ENCODE measurements at regions of chr3 and their contacts with region 1.

Region 1: DNA sequence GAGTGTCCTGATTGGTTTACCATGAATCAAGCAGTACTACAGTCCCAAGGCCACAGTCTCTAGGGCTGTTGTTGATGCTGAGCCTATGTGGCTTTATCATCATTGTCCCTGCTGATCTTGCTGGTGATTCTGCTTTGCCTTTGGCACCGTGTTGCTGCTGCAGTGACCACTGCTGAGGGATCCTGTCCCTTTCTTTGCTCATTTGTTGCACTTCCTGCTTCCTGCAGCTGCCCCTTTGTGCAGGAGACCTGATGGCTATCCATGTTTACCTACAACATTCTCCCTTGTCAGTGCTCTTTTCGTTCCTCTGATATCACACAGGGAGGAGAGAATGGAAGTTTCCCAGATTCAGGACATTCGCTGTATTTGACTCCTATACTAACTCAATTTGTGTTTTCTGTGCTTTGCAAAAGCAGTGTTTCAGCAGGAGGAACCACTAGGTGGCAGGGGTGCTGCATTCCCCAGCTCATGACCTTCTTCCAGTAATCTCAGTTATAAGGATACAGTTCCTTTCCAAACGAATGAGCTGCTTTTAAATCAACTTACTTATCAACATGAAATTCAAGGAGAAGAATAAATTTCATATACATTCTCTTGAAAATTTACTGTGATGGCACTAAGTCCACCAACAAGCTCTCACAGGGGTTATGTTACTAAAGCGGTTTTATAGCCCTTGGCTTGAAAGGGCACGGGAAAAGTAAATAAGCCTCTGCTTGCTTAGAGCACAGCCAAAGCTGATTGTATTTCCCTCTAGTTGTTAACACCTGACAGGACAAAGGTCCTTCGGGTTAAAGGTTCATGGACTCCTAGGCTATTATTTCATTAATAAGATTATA is 9.7 kb upstream of the THUMPD3 start:
- DNase-seq: peak; percentile 71
- ATAC-seq: peak; percentile 44
- H3K4me3 ChIP-seq: no peak overlapping the region
- H3K4me3 Mint-ChIP-seq: no peak overlapping the region
- H3K27ac ChIP-seq: peak overlapping the region in 1 of 2 donors; percentile 74
- H3K27ac Mint-ChIP-seq: no peak overlapping the region
- H3K4me1 ChIP-seq: peaks cover 17 to 23% of the 10 kb centered on the region in 2 donors
- H3K4me1 Mint-ChIP-seq: peaks cover 26% of the 10 kb centered on the region
- H3K27me3 ChIP-seq: no peaks in the 10 kb centered on the region
- H3K27me3 Mint-ChIP-seq: no peaks in the 10 kb centered on the region
- CTCF ChIP-seq: peak; percentile 88

Region 2: DNA sequence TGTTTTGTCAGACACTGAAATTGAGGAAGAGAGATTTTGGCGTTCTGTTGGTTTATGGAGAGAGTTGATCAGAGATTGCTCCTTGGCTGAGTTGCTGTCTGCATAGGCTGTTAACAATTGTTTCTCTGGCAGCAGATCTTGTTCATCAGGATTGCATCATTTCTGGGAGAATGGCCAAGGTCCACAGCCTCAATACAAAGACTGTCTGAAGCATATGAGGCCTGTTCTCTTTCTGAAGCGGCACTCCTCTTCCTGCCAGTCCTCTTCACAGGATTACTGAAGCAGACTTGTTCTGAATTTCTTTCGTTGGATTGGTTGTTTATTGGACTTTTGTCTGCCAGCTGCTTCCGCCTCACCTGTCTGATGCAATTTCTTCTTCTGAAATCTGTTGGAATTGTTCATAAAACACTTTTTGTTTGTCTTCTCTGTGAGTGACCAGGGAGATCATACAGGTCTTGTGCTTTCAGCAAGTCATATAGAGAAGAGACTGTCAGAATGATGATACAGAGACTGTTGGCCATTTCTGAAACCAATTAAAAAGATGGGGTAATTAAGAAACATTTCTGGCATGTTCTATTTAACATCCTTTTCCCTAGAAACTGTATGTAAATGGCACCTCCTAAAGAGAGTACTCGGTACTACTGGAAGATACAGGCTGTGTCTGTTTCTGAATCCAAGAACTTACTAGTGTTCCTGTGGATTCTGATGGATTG is 69.7 kb after region 1 on chr3:
- CTCF ChIA-PET with region 1: interaction called, 48 read pairs
- POLR2A ChIA-PET with region 1: no interaction called
- intact Hi-C with region 1: loop called (anchors 1 kb)
- DNase-seq: peak; percentile 50
- ATAC-seq: peak; percentile 51
- H3K4me3 ChIP-seq: no peak overlapping the region
- H3K4me3 Mint-ChIP-seq: no peak overlapping the region
- H3K27ac ChIP-seq: peak overlapping the region in 1 of 2 donors; percentile 80
- H3K27ac Mint-ChIP-seq: peak overlapping the region; percentile 62
- H3K4me1 ChIP-seq: peaks cover 0 to 6% of the 10 kb centered on the region in 2 donors
- H3K4me1 Mint-ChIP-seq: peaks cover 26% of the 10 kb centered on the region
- H3K27me3 ChIP-seq: no peaks in the 10 kb centered on the region
- H3K27me3 Mint-ChIP-seq: no peaks in the 10 kb centered on the region
- CTCF ChIP-seq: peak; percentile 74

Region 3: GRCh38 chr3:9452417-9452816 is 99.3 kb after region 1 on chr3:
- CTCF ChIA-PET with region 1: interaction called, 5 read pairs
- POLR2A ChIA-PET with region 1: no interaction called
- intact Hi-C with region 1: loop called (anchors 5 kb)
- DNase-seq: no peak
- ATAC-seq: no peak
- H3K4me3 ChIP-seq: no peak overlapping the region
- H3K4me3 Mint-ChIP-seq: no peak overlapping the region
- H3K27ac ChIP-seq: peak overlapping the region in 1 of 2 donors; percentile 50
- H3K27ac Mint-ChIP-seq: peak overlapping the region; percentile 28
- H3K4me1 ChIP-seq: peaks cover 0 to 4% of the 10 kb centered on the region in 2 donors
- H3K4me1 Mint-ChIP-seq: peaks cover 6% of the 10 kb centered on the region
- H3K27me3 ChIP-seq: no peaks in the 10 kb centered on the region
- H3K27me3 Mint-ChIP-seq: no peaks in the 10 kb centered on the region
- CTCF ChIP-seq: no peak

Region 4: GRCh38 chr3:9649791-9650521 is 296.8 kb after region 1 on chr3:
- CTCF ChIA-PET with region 1: interaction called, 6 read pairs
- POLR2A ChIA-PET with region 1: no interaction called
- intact Hi-C with region 1: loop called (anchors 2 kb)
- DNase-seq: peak; percentile 81
- ATAC-seq: peak; percentile 44
- H3K4me3 ChIP-seq: peak overlapping the region; percentile 85 to 99 (median 99)
- H3K4me3 Mint-ChIP-seq: peak overlapping the region; percentile 95
- H3K27ac ChIP-seq: peak overlapping the region; percentile 92 to 95
- H3K27ac Mint-ChIP-seq: peak overlapping the region; percentile 97
- H3K4me1 ChIP-seq: peaks cover 43 to 59% of the 10 kb centered on the region in 2 donors
- H3K4me1 Mint-ChIP-seq: peaks cover 48% of the 10 kb centered on the region
- H3K27me3 ChIP-seq: no peaks in the 10 kb centered on the region
- H3K27me3 Mint-ChIP-seq: no peaks in the 10 kb centered on the region
- CTCF ChIP-seq: no peak